ENCODE measurements at regions of chr9 and their contacts with region 1.

Region 1: GRCh38 chr9:107340920-107341632 is 58.0 kb downstream of the RAD23B start:
- DNase-seq: peak; percentile 57
- ATAC-seq: peak; percentile 92
- H3K4me3 ChIP-seq: no peak overlapping the region
- H3K27ac ChIP-seq: no peak overlapping the region
- H3K4me1 ChIP-seq: peaks cover 4% of the 10 kb centered on the region; the same call in 1 of the 2 replicates
- H3K27me3 ChIP-seq: no peaks in the 10 kb centered on the region
- CTCF ChIP-seq: peak; percentile 93 to 96 (median 95); a peak in 5 of 6 replicates
- EP300 ChIP-seq: no peak
- POLR2A ChIP-seq: peak; percentile 39; the same call in 1 of the 2 replicates
- RAD21 ChIP-seq: peak; percentile 81

Region 2: GRCh38 chr9:107163370-107163769 is 177.7 kb before region 1 on chr9:
- CTCF ChIA-PET with region 1: interaction called, 56 read pairs
- POLR2A ChIA-PET with region 1: no interaction called
- RAD21 ChIA-PET with region 1: interaction called, 31 read pairs
- SMC1A ChIA-PET with region 1: interaction called, 63 read pairs
- in situ Hi-C with region 1: no loop called
- intact Hi-C with region 1: loop called (anchors 1 kb)
- DNase-seq: no peak
- ATAC-seq: no peak
- H3K4me3 ChIP-seq: no peak overlapping the region
- H3K27ac ChIP-seq: no peak overlapping the region
- H3K4me1 ChIP-seq: no peaks in the 10 kb centered on the region
- H3K27me3 ChIP-seq: peaks cover 0 to 3% of the 10 kb centered on the region in 2 experiments; a peak in 1 of 4 replicates
- CTCF ChIP-seq: no peak
- EP300 ChIP-seq: no peak
- POLR2A ChIP-seq: no peak
- RAD21 ChIP-seq: no peak

Region 3: DNA sequence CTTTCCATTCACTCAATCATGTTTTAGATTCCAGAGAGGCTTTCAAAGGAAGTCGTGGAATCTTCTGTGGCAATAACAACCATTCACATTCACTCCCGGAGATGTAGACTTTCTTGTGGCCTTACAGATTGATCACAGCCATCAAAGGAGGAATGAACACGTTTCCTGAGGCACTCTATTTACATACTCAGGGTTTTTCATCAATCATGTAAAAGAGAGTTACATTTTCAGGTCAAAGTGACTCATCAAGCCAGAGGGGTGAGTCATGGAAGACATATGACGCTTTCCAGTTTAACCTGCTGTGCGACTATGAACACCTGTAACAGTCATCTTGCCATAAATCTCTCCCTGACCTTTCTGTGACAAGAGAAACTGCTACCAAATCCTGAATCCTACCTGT is 97.3 kb before region 1 on chr9:
- CTCF ChIA-PET with region 1: interaction called, 149 read pairs
- POLR2A ChIA-PET with region 1: no interaction called
- RAD21 ChIA-PET with region 1: interaction called, 28 read pairs
- SMC1A ChIA-PET with region 1: interaction called, 47 read pairs
- in situ Hi-C with region 1: no loop called
- intact Hi-C with region 1: loop called (anchors 2 kb)
- DNase-seq: no peak
- ATAC-seq: peak; percentile 85
- H3K4me3 ChIP-seq: no peak overlapping the region
- H3K27ac ChIP-seq: no peak overlapping the region
- H3K4me1 ChIP-seq: no peaks in the 10 kb centered on the region
- H3K27me3 ChIP-seq: no peaks in the 10 kb centered on the region
- CTCF ChIP-seq: no peak
- EP300 ChIP-seq: no peak; a peak in 1 of 4 replicates
- POLR2A ChIP-seq: no peak
- RAD21 ChIP-seq: no peak

Region 4: GRCh38 chr9:107282753-107283625 is 58.1 kb before region 1 on chr9 and contains the start of gene RAD23B:
- CTCF ChIA-PET with region 1: interaction called, 33 read pairs
- POLR2A ChIA-PET with region 1: interaction called, 6 read pairs
- RAD21 ChIA-PET with region 1: interaction called, 14 read pairs
- SMC1A ChIA-PET with region 1: interaction called, 17 read pairs
- in situ Hi-C with region 1: no loop called
- intact Hi-C with region 1: no loop called
- DNase-seq: peak; percentile 88
- ATAC-seq: peak; percentile 89
- H3K4me3 ChIP-seq: peak within 1 kb of the TSS; percentile 82
- H3K27ac ChIP-seq: peak within 1 kb of the TSS; percentile 92
- H3K4me1 ChIP-seq: peaks cover 8% of the 10 kb centered on the region; the same call in 1 of the 2 replicates
- H3K27me3 ChIP-seq: no peaks in the 10 kb centered on the region
- CTCF ChIP-seq: no peak
- EP300 ChIP-seq: no peak
- POLR2A ChIP-seq: peak; percentile 93
- RAD21 ChIP-seq: no peak
- polyA plus RNA-seq, gene RAD23B: 24.1 to 26.4 TPM

Region 5: GRCh38 chr9:107323836-107324585 is 17.1 kb before region 1 on chr9:
- CTCF ChIA-PET with region 1: interaction called, 37 read pairs
- POLR2A ChIA-PET with region 1: interaction called, 4 read pairs
- RAD21 ChIA-PET with region 1: interaction called, 6 read pairs
- SMC1A ChIA-PET with region 1: interaction called, 15 read pairs
- in situ Hi-C with region 1: no loop called
- intact Hi-C with region 1: no loop called
- DNase-seq: no peak
- ATAC-seq: no peak
- H3K4me3 ChIP-seq: no peak overlapping the region
- H3K27ac ChIP-seq: no peak overlapping the region
- H3K4me1 ChIP-seq: no peaks in the 10 kb centered on the region
- H3K27me3 ChIP-seq: no peaks in the 10 kb centered on the region
- CTCF ChIP-seq: no peak
- EP300 ChIP-seq: no peak
- POLR2A ChIP-seq: no peak
- RAD21 ChIP-seq: no peak

Region 6: GRCh38 chr9:107624234-107624960 is 283.3 kb after region 1 on chr9:
- CTCF ChIA-PET with region 1: no interaction called
- POLR2A ChIA-PET with region 1: no interaction called
- RAD21 ChIA-PET with region 1: no interaction called
- SMC1A ChIA-PET with region 1: no interaction called
- in situ Hi-C with region 1: no loop called
- intact Hi-C with region 1: no loop called
- DNase-seq: no peak
- ATAC-seq: no peak
- H3K4me3 ChIP-seq: no peak overlapping the region
- H3K27ac ChIP-seq: no peak overlapping the region
- H3K4me1 ChIP-seq: no peaks in the 10 kb centered on the region
- H3K27me3 ChIP-seq: peaks cover 0 to 2% of the 10 kb centered on the region in 2 experiments; a peak in 3 of 4 replicates
- CTCF ChIP-seq: no peak
- EP300 ChIP-seq: no peak
- POLR2A ChIP-seq: no peak
- RAD21 ChIP-seq: no peak